ENCODE measurements at regions of chr17 and their contacts with region 1.

Region 1: GRCh38 chr17:31216053-31216751 is 80.8 kb downstream of the OMG start:
- DNase-seq: no peak
- ATAC-seq: no peak
- H3K4me3 Mint-ChIP-seq: no peak overlapping the region
- H3K27ac Mint-ChIP-seq: no peak overlapping the region
- H3K4me1 Mint-ChIP-seq: no peaks in the 10 kb centered on the region
- H3K27me3 Mint-ChIP-seq: no peaks in the 10 kb centered on the region

Region 2: DNA sequence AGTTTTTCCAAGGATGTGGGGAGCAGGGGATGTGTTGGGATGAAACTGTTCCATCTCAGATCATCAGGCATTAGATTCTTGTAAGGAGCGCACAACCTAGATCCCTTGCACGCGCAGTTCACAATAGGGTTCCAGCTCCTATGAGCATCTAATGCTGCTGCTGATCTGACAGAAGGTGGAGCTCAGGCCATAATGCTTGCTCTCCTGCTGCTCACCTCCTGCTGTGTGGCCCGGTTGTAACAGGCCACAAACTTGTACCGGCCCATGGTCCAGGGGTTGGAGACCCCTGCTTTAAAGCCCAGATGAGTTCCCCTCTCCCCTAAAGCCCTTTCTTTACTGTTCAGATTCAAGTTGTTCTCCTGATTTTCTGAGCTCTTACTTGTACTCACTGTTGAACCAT is 200.6 kb before region 1 on chr17:
- CTCF ChIA-PET with region 1: interaction called, 26 read pairs
- DNase-seq: no peak
- ATAC-seq: no peak
- H3K4me3 Mint-ChIP-seq: no peak overlapping the region
- H3K27ac Mint-ChIP-seq: no peak overlapping the region
- H3K4me1 Mint-ChIP-seq: peaks cover 3% of the 10 kb centered on the region
- H3K27me3 Mint-ChIP-seq: peaks cover 1% of the 10 kb centered on the region

Region 3: GRCh38 chr17:31275116-31275515 is 58.9 kb after region 1 on chr17:
- CTCF ChIA-PET with region 1: no interaction called
- DNase-seq: no peak
- ATAC-seq: no peak
- H3K4me3 Mint-ChIP-seq: no peak overlapping the region
- H3K27ac Mint-ChIP-seq: no peak overlapping the region
- H3K4me1 Mint-ChIP-seq: no peaks in the 10 kb centered on the region
- H3K27me3 Mint-ChIP-seq: no peaks in the 10 kb centered on the region

Region 4: GRCh38 chr17:31321481-31321880 is 105.3 kb after region 1 on chr17 and contains the start of gene EVI2A:
- CTCF ChIA-PET with region 1: no interaction called
- DNase-seq: peak; percentile 92
- ATAC-seq: peak; percentile 93
- H3K4me3 Mint-ChIP-seq: peak within 1 kb of the TSS; percentile 81
- H3K27ac Mint-ChIP-seq: peak within 1 kb of the TSS; percentile 96
- H3K4me1 Mint-ChIP-seq: peaks cover 28% of the 10 kb centered on the region
- H3K27me3 Mint-ChIP-seq: no peaks in the 10 kb centered on the region
- total RNA-seq, gene EVI2A: 37.3 to 45.9 TPM

Measured in activated CD8-positive, alpha-beta memory T cell treated with anti-CD3 and anti-CD28 coated beads, Interleukin-2, amount 10 ng/mL, durations not matched to agents 7 days and 5 days (primary cell).